BJ (cell line): ENCODE measurements at regions of chr10 and their contacts with region 1.

Region 1: GRCh38 chr10:116787893-116788665 is 45.7 kb upstream of the HSPA12A start:
- DNase-seq: no peak
- H3K4me3 ChIP-seq: peak overlapping the region; percentile 10; the same call in 1 of the 2 replicates
- H3K27me3 ChIP-seq: no peaks in the 10 kb centered on the region; the same call in 1 of the 2 replicates
- CTCF ChIP-seq: peak; percentile 99

Region 2: GRCh38 chr10:116673866-116674265 is 114.2 kb before region 1 on chr10:
- CTCF ChIA-PET with region 1: interaction called, 335 read pairs
- POLR2A ChIA-PET with region 1: no interaction called
- DNase-seq: no peak
- H3K4me3 ChIP-seq: no peak overlapping the region
- H3K27me3 ChIP-seq: no peaks in the 10 kb centered on the region
- CTCF ChIP-seq: no peak

Region 3: GRCh38 chr10:116702165-116702564 is 85.9 kb before region 1 on chr10:
- CTCF ChIA-PET with region 1: interaction called, 12 read pairs
- POLR2A ChIA-PET with region 1: no interaction called
- DNase-seq: no peak
- H3K4me3 ChIP-seq: no peak overlapping the region
- H3K27me3 ChIP-seq: no peaks in the 10 kb centered on the region
- CTCF ChIP-seq: no peak

Region 4: DNA sequence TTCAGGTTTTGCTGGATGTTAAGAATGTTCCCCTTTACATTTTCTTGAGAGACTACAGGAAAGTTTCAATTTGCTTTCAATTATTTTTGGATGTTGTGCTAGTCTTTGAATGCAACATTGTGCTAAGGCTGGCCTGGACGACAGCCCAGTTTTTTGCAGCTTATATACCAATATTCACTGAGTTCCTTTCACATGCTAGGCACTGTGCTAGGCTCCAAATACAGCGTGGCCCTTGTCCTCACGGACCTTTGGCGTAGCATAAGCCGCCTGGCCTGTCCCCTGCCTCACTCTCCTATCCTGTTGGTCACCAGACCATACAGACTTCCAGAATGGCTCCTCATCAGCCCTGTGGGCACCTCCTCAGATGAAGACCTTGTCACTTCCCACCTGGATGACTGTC is 26.2 kb before region 1 on chr10:
- CTCF ChIA-PET with region 1: interaction called, 18 read pairs
- POLR2A ChIA-PET with region 1: no interaction called
- DNase-seq: no peak
- H3K4me3 ChIP-seq: no peak overlapping the region
- H3K27me3 ChIP-seq: no peaks in the 10 kb centered on the region
- CTCF ChIP-seq: no peak

Region 5: DNA sequence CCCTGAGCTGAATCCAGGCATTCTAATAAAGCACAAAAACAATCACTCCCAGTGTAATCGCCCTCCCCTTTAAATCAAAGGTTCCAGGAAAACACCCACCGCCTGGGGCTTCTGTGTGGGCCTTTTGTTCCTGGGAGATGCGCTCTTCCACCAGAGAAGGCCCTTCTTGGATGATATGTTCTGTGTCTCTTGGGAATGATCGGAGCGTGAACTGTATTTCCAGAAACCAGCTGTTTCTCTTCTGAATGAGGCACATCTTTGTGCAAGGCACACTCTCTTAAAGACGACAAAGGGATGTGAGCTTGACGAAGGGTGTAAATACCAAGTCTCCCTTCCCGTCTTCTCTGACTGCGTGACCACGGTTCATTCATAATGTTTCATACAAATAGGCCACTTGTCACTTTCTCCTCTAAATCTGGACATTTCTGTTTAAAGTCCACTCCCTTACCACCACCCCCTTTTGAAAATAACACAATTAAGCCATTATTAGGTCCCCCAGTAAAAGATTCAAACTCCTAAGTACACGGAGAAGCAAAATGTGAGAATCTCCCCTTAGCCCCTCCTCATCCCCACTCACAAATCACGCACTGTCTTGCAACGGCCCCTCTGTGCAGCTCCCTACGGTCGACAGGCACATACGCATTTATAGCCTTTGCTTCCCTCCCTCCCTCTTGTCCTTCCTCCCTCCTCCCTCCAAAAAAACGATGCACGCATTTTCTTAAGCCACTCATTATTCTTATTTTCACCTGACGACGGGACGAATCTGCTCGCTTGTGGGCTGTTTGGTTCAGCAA is 15.6 kb after region 1 on chr10:
- CTCF ChIA-PET with region 1: interaction called, 13 read pairs
- POLR2A ChIA-PET with region 1: no interaction called
- DNase-seq: no peak
- H3K4me3 ChIP-seq: no peak overlapping the region
- H3K27me3 ChIP-seq: no peaks in the 10 kb centered on the region; the same call in 1 of the 2 replicates
- CTCF ChIP-seq: no peak